Left ventricle myocardium superior (tissue), 1 donor: ENCODE measurements at regions of chr4 and their contacts with region 1.

Region 1: DNA sequence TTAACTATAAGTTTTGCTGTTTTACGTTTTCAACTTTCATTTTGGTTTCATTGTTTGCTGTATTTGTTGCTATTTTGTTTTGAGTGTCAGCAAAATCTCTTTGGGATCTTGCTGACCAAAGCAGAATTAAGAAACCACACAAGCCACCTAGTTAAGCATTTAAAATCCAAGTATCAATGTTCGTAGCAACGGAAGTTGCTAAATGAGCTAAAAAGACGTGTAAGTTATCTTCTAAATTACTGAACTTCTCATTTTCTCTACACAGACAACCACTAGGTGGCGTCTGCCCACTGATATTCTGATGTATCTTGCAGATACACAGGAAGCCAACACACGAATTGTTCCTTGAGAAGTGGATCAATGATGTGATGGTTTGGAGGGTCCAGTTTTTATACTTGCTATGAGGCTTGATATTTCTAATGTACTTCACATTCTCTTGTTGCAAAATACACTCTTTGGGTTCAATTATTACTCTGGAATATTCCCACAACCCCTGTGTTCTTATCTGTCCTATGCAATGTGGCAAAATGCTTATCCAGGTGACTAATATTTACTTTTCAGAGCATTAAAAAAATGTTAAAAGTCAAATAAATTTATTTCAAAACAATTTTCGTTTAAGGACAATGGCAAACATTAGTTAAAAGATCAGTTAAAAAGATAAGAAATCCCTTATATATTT is 250.5 kb downstream of the TECRL start:
- DNase-seq: no peak
- ATAC-seq: no peak

Region 2: GRCh38 chr4:64539234-64539849 is 380.6 kb after region 1 on chr4:
- intact Hi-C with region 1: loop called (anchors 2 kb)
- DNase-seq: no peak
- ATAC-seq: peak; percentile 85